Mammary epithelial cell (primary cell): ENCODE measurements at regions of chr11 and their contacts with region 1.

Region 1: DNA sequence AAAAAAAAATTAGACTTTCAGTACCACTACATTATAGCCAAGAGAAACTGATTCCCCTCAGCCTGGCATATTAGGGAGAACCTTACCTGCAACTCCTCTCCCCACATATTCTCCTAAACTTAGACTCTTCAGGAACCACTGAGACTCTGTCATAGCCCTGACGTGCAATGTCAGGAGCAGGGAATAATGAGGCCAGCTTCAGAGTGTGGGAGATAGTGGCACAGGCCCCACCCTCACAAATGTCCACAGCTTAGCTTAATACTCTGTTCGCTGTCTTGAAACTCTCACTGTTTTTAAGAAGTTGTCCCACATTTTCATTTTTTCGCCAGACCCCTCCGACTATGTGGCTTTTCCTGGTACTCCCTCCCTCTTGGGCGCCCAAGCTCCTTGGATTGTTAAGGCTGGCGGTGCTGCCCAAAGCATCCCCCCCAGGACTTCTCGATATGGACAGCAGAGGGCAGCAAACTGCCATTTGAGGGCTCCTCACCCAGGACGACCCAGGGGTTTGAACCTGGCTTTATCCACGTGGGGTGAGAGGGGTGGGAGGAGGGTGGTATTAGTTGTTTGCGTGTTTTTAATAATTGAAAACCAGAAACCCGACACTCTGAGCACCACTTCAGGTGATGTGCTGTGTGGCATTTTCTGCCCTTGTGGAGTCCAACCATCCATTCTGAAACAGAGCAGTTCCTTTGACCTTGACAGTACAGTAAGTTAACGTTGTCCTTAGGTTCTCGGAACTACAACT is 45.2 kb upstream of the RASSF10 start:
- DNase-seq: peak; percentile 46
- H3K4me3 ChIP-seq: no peak overlapping the region
- H3K27ac ChIP-seq: no peak overlapping the region
- H3K4me1 ChIP-seq: peaks cover 22% of the 10 kb centered on the region
- H3K27me3 ChIP-seq: no peaks in the 10 kb centered on the region
- CTCF ChIP-seq: peak; percentile 86 to 90

Region 2: GRCh38 chr11:12331239-12331874 is 632.6 kb before region 1 on chr11:
- CTCF ChIA-PET with region 1: interaction called, 10 read pairs
- dilution Hi-C with region 1: no loop called
- in situ Hi-C with region 1: no loop called
- intact Hi-C with region 1: loop called (anchors 1 kb)
- DNase-seq: peak; percentile 70
- H3K4me3 ChIP-seq: no peak overlapping the region
- H3K27ac ChIP-seq: no peak overlapping the region
- H3K4me1 ChIP-seq: peaks cover 11% of the 10 kb centered on the region
- H3K27me3 ChIP-seq: no peaks in the 10 kb centered on the region
- CTCF ChIP-seq: peak; percentile 69 to 81

Region 3: DNA sequence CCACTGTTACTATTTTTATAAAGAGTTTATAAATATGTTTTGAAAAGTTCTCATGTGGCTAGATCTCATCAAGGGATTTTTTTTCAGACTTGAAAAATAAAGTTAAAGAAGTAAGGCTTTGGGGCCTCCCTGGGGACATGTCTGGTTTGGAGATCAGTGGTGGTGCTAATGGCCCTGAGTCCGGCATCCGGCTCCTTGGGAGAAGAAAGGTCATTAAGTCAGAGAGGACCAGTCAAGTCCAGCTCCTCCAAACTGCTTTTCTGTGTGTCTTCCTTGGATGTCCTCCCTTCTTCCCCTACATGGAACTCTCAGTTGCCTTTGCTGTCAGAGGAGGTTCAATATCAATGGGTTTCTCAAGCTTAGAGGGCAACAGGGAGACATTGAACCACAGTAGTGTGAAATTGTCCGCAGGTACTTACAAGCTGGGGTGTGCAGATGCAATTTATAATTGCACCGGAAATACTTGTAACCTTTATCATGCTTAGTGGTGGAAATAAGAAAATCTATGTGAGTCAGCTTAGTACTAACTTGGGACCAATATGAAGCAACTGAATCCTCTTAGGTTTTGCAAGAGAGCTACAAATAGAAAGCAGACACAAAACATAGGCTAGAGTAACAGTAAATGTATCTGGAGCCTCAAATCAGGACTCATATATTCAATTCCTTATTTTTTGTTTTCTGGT is 145.5 kb before region 1 on chr11:
- CTCF ChIA-PET with region 1: no interaction called
- dilution Hi-C with region 1: no loop called
- in situ Hi-C with region 1: no loop called
- intact Hi-C with region 1: no loop called
- DNase-seq: peak; percentile 81
- H3K4me3 ChIP-seq: no peak overlapping the region
- H3K27ac ChIP-seq: peak overlapping the region; percentile 54
- H3K4me1 ChIP-seq: peaks cover 46% of the 10 kb centered on the region
- H3K27me3 ChIP-seq: no peaks in the 10 kb centered on the region
- CTCF ChIP-seq: no peak

Region 4: GRCh38 chr11:13008625-13009475 is 44.9 kb after region 1 on chr11 and contains the start of gene RASSF10:
- CTCF ChIA-PET with region 1: interaction called, 11 read pairs
- dilution Hi-C with region 1: loop called (anchors 5 kb)
- in situ Hi-C with region 1: no loop called
- intact Hi-C with region 1: loop called (anchors 1 kb)
- DNase-seq: peak; percentile 91
- H3K4me3 ChIP-seq: peak within 1 kb of the TSS; percentile 54 to 66 (median 57)
- H3K27ac ChIP-seq: peak within 1 kb of the TSS; percentile 29
- H3K4me1 ChIP-seq: peaks cover 58% of the 10 kb centered on the region
- H3K27me3 ChIP-seq: no peaks in the 10 kb centered on the region
- CTCF ChIP-seq: no peak
- total RNA-seq, gene RASSF10: 6.0 to 7.5 TPM

Region 5: DNA sequence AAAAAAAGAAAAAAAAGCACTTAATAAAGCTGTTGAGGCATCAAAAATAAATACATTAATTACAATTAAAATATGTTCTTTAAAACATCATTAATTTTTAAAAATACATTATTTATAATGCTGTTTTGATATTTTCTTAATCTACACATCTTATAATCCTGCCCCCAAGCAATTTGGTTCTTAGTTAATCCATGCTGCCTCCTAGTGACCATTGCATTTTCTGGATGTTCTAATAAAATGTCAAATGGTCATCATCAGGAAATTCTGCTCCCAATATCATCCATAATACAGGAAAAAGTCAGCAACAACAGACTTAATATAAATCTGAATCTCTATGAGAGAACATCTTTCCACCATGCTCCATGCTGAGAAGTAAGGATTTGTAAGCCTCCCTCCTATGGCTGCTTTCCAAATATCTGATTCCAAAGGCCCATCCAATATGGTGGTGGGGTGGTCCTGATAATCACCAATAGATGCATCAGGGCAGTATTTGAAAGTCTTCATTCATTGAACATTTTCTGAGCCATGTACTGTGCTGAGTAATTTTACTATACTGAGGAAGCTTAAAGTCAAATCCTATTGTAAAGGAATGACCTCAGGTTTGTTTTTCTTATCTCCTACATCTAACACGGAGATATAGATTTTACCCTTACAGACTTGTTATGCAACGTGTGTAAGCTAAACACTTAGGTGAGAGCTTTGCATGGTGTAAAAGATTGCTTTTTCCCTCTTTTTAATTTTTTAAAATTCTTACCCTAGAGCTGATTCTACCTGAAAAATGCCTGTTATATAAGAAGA is 189.0 kb after region 1 on chr11:
- CTCF ChIA-PET with region 1: interaction called, 3 read pairs
- dilution Hi-C with region 1: no loop called
- in situ Hi-C with region 1: loop called (anchors 5 to 10 kb)
- intact Hi-C with region 1: loop called (anchors 1 kb)
- DNase-seq: no peak
- H3K4me3 ChIP-seq: no peak overlapping the region
- H3K27ac ChIP-seq: no peak overlapping the region
- H3K4me1 ChIP-seq: peaks cover 15% of the 10 kb centered on the region
- H3K27me3 ChIP-seq: no peaks in the 10 kb centered on the region
- CTCF ChIP-seq: peak; percentile 65 to 73

Region 6: GRCh38 chr11:13238879-13239514 is 275.0 kb after region 1 on chr11:
- CTCF ChIA-PET with region 1: no interaction called
- dilution Hi-C with region 1: no loop called
- in situ Hi-C with region 1: no loop called
- intact Hi-C with region 1: loop called (anchors 1 kb)
- DNase-seq: no peak
- H3K4me3 ChIP-seq: no peak overlapping the region
- H3K27ac ChIP-seq: no peak overlapping the region
- H3K4me1 ChIP-seq: peaks cover 9% of the 10 kb centered on the region
- H3K27me3 ChIP-seq: no peaks in the 10 kb centered on the region
- CTCF ChIP-seq: peak; percentile 81 to 92